ENCODE measurements at regions of chr5 and their contacts with region 1.

Region 1: DNA sequence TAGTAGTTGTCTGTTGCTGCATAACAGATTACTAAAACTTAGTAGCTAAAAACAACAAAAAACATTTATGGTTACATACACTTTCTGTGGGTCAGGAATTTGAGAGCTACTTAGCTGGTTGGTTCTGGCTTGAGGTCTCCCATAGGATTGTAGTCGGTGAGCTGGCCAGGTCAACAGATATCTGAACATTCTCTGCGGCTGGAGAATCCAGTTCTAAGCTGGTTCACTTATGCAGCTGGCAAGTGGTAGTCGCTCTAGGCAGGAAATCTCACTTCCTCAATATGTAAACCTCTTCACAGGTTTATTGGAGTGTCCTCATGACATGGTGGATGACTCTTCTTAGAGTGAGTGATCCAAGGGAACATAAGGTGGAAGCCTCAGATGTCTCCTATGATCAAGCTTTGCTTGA is 65.7 kb upstream of the TNFAIP8 start:
- DNase-seq: peak; percentile 29
- CTCF ChIP-seq: no peak

Region 2: DNA sequence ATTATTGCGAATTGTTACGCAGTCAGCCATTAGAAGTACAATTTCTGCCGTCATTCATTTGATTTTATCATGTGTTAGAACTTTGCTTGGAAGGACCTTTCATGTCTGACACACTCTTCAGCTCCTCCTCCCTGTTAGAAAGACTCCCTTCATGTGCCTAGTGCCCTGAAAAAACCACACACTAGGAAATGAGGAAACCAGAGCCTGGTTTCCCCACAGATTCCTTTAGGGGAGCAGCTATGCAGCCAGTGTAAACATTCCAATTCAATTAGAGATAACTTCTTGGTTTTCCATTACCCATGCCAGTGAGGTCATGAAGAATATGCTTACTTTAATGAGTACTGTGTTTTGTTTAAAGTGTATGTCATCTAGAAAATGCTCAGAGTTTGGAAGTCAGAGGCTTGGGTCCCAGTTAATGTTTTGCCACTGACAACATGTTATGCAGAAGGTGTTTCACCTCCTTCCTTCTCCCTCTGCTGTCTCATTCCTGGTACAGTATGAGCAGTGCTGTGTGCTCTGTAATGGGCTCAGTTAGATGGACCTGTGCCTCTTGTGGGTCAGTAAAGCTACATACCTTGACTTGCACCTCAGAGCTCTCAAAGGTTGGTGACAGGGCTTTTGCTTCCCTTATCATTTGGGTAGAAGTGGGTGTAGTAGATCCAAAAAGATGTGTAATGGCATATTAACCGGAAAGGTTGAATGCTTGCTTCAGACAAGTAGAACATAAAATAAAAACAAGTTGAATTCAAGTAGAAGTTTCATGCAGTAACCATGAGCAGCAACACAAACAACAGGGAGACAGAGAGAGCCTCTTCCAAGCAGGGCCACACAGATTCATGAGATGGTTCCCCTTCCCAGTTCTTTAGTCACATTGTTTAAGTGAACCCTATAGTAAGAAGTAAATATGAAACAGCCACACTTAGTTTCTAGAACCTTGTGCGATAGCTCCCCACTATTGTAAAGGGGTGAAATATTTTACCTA is 13.0 kb after region 1 on chr5:
- CTCF ChIA-PET with region 1: interaction called, 40 read pairs
- POLR2A ChIA-PET with region 1: no interaction called
- DNase-seq: no peak
- CTCF ChIP-seq: no peak

Region 3: GRCh38 chr5:119397518-119398380 is 107.6 kb after region 1 on chr5:
- CTCF ChIA-PET with region 1: no interaction called
- POLR2A ChIA-PET with region 1: no interaction called
- DNase-seq: no peak
- CTCF ChIP-seq: no peak